Mammary epithelial cell (primary cell): ENCODE measurements at regions of chr1 and their contacts with region 1.

Region 1: GRCh38 chr1:108643492-108644335 is 17.2 kb downstream of the HENMT1 start:
- DNase-seq: peak; percentile 46
- H3K4me3 ChIP-seq: no peak overlapping the region
- H3K27ac ChIP-seq: no peak overlapping the region
- H3K4me1 ChIP-seq: peaks cover 7% of the 10 kb centered on the region
- H3K27me3 ChIP-seq: no peaks in the 10 kb centered on the region
- CTCF ChIP-seq: peak; percentile 53 to 66

Region 2: DNA sequence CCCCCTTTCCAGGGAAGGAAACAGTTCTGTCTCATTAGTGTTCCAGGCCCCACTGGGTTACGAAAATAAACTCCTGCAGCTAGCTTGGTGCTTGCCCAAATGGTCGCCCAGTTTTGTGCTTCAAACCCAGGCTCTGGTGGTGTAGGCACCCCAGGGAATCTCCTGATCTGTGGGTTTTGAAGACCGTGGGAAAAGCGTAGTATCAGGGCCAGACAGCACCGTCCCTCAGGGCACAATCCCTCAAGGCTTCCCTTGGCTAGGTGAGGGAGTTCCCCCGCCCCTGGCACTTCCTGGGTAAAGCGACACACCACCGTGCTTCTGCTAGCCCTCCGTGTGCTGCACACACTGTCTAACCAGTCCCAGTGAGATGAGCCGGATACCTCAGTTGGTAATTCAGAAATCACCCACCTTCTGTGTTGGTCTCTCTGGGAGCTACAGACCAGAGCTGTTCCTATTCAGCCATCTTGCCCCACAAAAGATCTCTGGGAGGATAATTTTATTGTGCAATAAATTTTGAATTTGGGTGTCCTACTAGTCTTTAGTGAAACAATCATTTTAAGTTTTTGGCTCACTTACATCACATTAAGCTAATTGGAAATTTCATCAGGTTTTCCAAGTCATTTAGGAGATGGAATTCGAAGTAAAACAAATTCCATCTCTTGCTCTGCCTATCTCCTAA is 434.1 kb before region 1 on chr1:
- CTCF ChIA-PET with region 1: no interaction called
- dilution Hi-C with region 1: no loop called
- in situ Hi-C with region 1: no loop called
- intact Hi-C with region 1: loop called (anchors 10 kb)
- DNase-seq: peak; percentile 25
- H3K4me3 ChIP-seq: no peak overlapping the region
- H3K27ac ChIP-seq: no peak overlapping the region
- H3K4me1 ChIP-seq: no peaks in the 10 kb centered on the region
- H3K27me3 ChIP-seq: no peaks in the 10 kb centered on the region
- CTCF ChIP-seq: no peak

Region 3: DNA sequence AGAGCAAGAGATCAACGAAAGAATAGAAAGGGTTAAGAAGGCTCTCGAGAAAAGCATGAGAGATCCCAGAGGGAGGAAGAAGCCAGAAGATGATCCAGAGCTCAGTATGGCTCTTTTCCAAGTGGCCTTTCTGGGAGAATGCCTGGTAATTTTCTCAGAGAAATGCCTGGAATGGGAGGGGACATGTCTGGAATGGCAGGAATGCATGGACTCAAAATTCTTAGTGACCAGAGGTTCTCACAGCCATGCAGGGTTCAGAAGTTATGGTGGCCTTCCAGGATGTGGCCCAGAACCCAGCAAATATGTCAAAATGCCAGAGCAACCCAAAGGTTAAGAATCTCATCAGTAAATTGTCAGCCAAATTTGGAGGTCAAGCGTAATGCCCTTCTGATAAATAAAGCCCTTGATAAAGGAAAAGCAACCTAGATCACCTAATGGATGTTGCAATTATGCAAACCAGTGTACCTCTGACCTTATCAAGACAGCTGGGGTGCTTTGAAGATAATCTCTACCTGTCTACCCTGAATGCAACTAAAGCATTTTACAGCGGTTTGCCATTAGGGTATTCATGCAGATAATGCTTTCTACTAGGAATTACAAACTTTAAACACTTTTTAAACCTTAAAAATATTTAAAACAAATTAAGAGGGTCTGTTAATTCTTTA is 140.5 kb before region 1 on chr1:
- CTCF ChIA-PET with region 1: no interaction called
- dilution Hi-C with region 1: no loop called
- in situ Hi-C with region 1: loop called in 1 of 2 experiments (anchors 10 kb)
- intact Hi-C with region 1: no loop called
- DNase-seq: no peak
- H3K4me3 ChIP-seq: no peak overlapping the region
- H3K27ac ChIP-seq: no peak overlapping the region
- H3K4me1 ChIP-seq: peaks cover 10% of the 10 kb centered on the region
- H3K27me3 ChIP-seq: no peaks in the 10 kb centered on the region
- CTCF ChIP-seq: no peak

Region 4: DNA sequence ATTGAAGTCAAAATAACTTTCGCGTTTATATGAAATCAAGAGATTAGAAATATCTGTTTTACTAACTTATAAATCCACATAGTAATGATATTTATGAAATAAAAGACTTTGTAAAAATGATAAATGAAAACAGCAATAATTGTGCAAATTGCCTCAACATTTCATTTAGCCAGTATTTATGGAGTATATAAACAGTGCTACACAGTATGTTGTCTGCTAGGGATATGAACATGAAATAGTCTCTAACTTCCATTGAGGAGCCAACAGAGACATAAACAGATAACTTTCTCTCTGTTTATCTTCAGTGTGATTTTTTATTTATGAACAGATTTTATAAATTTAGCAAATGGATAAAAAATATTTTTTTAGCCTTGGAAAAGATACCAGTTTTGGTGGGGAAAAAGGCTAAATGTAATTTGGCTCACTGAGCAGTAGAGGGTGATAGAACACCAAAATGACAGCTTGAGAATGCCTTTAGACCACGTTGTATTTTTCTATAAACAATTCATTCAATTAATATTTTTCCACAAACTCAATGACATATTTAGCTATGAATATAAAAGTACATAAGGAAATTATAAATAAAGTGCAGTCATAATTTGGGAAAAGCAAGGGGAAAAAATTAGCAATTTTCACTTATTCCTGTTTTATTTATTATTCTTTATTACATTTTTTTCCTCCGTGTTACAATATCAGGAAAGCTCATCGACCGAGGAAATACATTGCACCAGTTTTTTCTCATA is 131.3 kb before region 1 on chr1:
- CTCF ChIA-PET with region 1: no interaction called
- dilution Hi-C with region 1: no loop called
- in situ Hi-C with region 1: loop called in 1 of 2 experiments (anchors 10 kb)
- intact Hi-C with region 1: loop called (anchors 1 kb)
- DNase-seq: no peak
- H3K4me3 ChIP-seq: no peak overlapping the region
- H3K27ac ChIP-seq: no peak overlapping the region
- H3K4me1 ChIP-seq: no peaks in the 10 kb centered on the region
- H3K27me3 ChIP-seq: no peaks in the 10 kb centered on the region
- CTCF ChIP-seq: peak; percentile 68 to 81

Region 5: DNA sequence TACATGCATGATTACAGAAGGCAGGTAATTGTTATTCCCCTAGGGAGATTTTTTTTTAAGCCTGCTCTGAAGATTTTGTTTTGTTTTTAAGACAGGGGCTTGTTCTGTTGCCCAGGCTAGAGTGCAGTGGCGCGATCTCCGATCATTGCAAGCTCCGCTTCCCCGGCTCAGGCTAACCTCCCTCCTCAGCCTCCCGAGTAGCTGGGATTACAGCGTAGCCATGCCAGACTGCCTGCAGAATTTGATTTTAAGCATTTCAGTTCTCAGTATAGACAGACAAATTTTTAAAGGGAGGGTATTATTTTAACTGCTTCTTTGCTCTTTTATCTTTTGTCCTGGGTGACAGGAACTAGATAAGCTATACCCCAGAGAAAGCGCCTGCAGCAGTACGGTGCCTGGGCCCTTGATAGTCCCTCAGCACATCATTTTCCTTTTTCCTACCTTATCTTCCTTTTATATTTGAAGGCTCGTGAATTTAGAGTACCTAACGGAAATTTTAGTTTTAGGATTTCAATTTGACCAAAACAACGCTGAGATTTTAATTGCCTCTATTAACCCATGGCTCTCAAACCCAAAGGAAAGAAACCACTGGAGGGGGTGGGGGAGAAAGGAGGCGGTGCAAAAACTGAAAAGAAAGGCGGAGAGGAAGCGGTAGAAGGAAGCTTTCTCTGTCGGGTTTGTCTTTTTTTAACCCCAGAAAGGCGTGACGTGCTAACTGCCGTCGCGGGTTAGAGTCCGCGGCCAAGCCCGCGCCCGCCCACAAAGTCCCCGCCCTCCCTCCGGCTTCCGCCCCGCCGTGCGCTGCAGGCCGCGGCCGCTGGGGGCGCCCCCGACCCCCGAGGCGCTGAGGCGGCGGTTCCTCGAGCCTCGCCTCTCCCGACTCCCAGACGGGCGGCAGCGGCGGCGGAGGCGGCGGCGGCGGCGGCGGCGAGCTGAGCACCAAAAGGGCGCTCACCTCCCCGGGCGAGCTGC is 84.2 kb before region 1 on chr1 and contains the start of gene EEIG2:
- CTCF ChIA-PET with region 1: interaction called, 3 read pairs
- dilution Hi-C with region 1: no loop called
- in situ Hi-C with region 1: no loop called
- intact Hi-C with region 1: loop called (anchors 1 kb)
- DNase-seq: peak; percentile 81
- H3K4me3 ChIP-seq: peak within 1 kb of the TSS; percentile 52 to 57 (median 53)
- H3K27ac ChIP-seq: peak within 1 kb of the TSS; percentile 25
- H3K4me1 ChIP-seq: peaks cover 22% of the 10 kb centered on the region
- H3K27me3 ChIP-seq: no peaks in the 10 kb centered on the region
- CTCF ChIP-seq: peak; percentile 34 to 58
- total RNA-seq, gene EEIG2: 4.5 to 10.0 TPM